Left colon (tissue), 2 donors: ENCODE measurements at regions of chr16 and their contacts with region 1.

Region 1: DNA sequence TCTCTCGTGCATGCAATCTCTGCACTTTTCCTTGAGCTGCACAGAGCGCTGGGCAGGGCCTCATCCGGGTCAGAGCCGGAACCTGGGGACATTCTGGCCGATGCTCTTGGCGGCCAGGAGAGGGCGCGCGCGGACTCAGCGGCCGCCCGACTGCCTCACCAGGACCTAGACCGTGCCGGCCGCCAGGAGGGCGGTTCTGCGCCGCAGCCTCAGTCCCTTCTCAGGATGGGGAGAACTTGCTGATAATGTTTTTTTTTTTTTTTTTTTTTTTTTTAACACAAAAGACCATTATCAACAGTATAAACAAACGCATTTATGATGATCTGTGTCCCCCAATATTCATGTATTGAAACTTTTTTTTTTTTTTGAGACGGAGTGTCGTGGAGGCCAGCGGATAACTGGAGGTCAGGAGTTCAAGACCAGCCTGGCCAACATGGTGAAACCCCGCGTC is 8.1 kb upstream of the FLYWCH2 start:
- DNase-seq: peak; percentile 74 to 81
- ATAC-seq: peak; percentile 100

Region 2: GRCh38 chr16:2586241-2586640 is 288.7 kb before region 1 on chr16:
- intact Hi-C with region 1: no loop called
- DNase-seq: no peak
- ATAC-seq: no peak

Region 3: DNA sequence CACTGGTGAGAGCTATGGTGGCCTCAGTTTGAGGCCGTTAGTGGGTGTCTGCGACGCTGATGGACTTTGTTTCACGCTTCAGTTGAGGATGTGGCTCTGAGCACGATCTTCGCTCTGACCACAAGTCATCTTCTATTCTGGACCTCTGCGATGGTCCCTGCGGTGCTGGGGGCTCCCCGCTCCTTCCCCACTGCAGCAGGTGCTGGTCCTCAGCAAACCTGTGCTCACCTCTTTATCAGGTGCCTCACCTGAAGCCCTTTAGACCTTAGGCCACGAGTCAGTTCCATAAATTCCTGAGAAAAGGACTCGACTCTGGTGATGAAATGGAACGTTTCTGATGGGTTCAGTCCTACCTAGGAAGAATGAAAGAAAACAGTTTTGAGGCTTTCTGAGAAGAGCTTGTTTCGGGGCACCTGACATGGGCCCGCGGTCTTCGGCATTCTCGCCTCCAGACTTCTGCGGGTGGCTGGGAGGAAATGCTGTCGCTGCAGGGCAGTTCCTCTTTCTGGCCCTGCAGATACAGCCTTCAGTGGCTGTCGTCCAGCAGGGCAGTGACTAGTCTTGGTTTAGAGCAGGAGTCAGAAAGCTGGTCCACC is 187.9 kb before region 1 on chr16:
- intact Hi-C with region 1: no loop called
- DNase-seq: peak; percentile 55 to 61
- ATAC-seq: no peak

Region 4: DNA sequence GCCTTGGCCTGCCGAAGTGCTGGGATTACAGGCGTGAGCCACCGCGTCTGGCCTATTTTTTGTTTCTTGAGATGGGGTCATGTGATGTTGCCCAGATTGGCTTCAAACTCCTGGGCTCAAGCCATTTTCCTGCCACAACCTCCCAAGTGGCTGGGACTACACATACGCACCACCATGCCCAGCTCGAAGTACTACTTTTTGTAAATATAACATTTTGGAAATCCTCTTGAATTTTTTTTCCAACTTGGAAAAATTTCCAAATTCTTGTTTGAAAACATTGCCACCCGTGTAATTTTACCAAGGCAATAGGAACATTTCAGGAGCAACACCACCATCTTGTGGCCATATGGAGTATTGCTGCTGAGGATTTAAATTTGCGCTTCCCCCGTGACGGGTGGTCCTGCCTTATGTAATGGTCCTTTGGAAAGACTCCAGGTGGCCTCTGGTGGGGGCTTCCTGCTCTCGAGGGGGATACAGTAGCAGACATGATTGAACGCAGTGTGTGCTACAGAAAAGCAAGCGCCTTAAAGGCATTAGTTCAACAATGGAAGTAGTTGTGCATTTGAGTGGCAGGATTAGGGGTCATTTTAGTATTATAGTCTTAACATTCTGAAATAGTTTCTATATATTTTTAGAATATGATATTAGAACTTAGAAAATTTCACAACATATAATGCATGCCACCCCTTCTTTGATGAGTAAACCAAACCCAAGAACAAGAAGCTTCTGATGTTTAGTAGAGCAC is 44.7 kb after region 1 on chr16:
- intact Hi-C with region 1: loop called in 1 of 2 experiments (anchors 5 kb)
- DNase-seq: peak in 1 of 2 donors; percentile 51
- ATAC-seq: peak; percentile 53

Region 5: DNA sequence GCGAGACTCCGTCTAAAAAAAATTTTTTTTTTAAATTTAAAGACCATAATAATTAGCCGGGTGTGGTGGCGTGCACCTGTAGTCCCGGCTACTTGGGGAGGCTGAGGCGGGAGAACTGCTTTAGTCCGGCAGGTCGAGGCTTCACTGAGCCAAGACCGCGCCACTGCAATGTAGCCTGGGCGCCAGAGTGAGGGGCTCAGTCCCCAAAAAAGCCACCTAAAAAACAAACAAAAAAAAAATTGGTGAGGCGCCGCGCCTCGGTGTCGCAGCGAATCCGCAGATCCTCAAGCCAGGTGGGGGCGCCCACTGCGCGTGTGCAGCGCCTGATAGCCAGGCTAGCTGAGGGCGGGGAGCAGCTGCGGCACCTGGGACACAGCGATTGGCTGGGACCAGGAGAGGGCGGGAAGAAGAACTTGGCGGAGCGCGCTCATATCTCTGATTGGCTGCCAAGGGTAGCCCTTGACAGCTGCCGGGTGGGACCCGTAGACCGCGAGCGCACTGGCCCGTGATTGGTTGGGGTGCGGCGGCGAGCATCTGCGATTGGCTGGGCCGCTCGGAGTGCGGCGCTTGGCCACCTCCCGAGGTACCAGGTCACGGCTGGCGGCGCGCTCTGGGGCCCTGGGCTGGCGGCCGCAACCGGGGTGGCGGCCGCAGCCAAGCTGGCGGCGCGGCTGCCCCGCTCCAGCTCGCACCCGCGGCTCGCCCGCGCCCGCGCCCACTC is 128.8 kb after region 1 on chr16:
- intact Hi-C with region 1: no loop called
- DNase-seq: peak; percentile 96 to 98
- ATAC-seq: peak; percentile 72